IMR-90 (cell line): ENCODE measurements at regions of chr16 and their contacts with region 1.

Region 1: DNA sequence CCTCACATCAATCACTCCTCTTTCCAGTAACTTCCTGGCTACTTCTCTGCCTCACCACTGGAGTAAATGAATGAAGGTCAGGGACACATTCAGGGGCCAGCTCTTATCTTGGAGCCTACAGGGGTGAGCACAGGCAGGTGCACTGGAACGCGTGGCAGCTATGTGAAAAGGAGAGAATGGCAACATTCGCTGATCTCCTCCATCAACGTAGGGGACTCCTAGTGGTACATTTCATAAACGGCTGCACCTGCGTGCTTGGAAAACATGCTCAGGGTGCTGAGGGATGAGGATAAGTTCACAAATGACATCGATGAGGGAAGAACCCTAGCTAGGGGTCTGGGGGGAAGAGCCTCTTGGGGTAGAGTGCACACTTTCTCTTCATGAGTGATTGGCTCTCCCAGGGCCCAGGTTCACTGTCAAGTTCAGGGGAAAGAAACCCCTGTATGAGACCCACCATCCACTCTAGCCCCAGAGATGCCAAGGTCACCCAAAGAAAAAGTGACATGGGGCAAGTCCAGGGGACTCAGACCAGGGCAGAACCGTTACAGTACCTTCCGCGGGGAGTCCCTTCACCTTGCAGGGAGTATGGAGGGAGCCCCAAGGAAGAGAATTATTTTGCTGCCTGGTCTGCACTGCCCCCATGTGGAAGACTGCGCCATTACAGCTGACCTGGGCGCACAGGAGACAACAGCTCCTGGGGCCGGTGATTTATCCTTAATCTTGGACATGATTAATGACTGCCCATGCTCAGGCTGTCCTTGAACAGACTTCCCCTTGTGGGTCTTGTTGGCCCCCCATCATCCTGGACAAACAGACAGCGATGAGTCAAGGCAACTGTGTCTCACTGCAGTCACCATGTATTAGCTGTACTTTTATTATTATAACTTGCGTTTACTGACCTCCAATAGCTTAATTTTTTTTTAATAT is 30.1 kb downstream of the VAC14 start:
- DNase-seq: peak; percentile 54
- ATAC-seq: peak; percentile 94
- H3K4me3 ChIP-seq: no peak overlapping the region
- H3K27ac ChIP-seq: no peak overlapping the region
- H3K4me1 ChIP-seq: peaks cover 7% of the 10 kb centered on the region
- H3K27me3 ChIP-seq: no peaks in the 10 kb centered on the region
- CTCF ChIP-seq: peak; percentile 93
- POLR2A ChIP-seq: no peak
- RAD21 ChIP-seq: peak; percentile 98

Region 2: DNA sequence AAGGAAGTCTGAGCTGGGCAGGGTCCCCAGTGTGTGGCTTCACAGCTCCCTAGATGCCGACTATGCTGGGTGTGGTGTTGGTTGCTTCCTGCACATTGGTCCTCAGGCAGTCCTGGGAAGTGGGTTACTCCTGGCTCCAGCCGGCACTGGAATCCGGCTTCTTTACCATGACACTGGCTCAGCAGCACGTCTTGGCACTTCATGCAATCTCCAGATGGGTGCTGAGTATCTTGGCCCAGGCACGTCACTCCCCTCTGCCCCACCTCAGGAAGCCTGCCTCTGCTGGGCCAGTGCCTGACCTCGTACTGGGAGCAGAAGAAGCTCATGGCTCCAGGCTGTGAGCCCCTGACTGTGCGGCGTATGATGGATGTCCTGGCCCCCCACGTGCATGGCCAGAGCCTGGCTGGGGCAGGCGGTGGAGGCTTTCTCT is 292.0 kb before region 1 on chr16:
- CTCF ChIA-PET with region 1: no interaction called
- POLR2A ChIA-PET with region 1: no interaction called
- dilution Hi-C with region 1: no loop called
- in situ Hi-C with region 1: no loop called
- intact Hi-C with region 1: no loop called
- DNase-seq: no peak
- ATAC-seq: no peak
- H3K4me3 ChIP-seq: no peak overlapping the region
- H3K27ac ChIP-seq: no peak overlapping the region
- H3K4me1 ChIP-seq: peaks cover 15% of the 10 kb centered on the region
- H3K27me3 ChIP-seq: no peaks in the 10 kb centered on the region
- CTCF ChIP-seq: no peak
- POLR2A ChIP-seq: no peak
- RAD21 ChIP-seq: no peak

Region 3: DNA sequence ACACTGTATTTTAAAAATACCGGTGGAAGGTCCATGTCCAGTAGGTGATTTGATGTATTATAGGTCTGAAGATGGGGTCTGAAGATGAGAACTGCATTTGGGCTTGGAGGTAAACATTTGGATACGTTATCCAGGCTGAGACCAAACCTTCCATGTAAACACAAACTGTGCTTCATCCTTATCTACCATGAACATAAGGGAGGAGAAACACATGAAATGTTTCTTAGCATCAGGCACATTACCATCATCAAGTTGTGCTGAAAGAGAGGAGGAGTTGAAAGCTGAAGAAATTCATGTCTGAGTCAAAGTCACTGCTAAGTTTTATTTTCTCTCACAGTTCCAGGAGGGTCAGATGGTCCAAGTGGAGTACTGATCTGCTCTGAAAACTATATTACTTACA is 235.9 kb before region 1 on chr16:
- CTCF ChIA-PET with region 1: no interaction called
- POLR2A ChIA-PET with region 1: no interaction called
- dilution Hi-C with region 1: no loop called
- in situ Hi-C with region 1: loop called (anchors 10 kb)
- intact Hi-C with region 1: no loop called
- DNase-seq: no peak
- ATAC-seq: no peak
- H3K4me3 ChIP-seq: no peak overlapping the region
- H3K27ac ChIP-seq: no peak overlapping the region
- H3K4me1 ChIP-seq: no peaks in the 10 kb centered on the region
- H3K27me3 ChIP-seq: no peaks in the 10 kb centered on the region
- CTCF ChIP-seq: no peak
- POLR2A ChIP-seq: no peak
- RAD21 ChIP-seq: no peak

Region 4: DNA sequence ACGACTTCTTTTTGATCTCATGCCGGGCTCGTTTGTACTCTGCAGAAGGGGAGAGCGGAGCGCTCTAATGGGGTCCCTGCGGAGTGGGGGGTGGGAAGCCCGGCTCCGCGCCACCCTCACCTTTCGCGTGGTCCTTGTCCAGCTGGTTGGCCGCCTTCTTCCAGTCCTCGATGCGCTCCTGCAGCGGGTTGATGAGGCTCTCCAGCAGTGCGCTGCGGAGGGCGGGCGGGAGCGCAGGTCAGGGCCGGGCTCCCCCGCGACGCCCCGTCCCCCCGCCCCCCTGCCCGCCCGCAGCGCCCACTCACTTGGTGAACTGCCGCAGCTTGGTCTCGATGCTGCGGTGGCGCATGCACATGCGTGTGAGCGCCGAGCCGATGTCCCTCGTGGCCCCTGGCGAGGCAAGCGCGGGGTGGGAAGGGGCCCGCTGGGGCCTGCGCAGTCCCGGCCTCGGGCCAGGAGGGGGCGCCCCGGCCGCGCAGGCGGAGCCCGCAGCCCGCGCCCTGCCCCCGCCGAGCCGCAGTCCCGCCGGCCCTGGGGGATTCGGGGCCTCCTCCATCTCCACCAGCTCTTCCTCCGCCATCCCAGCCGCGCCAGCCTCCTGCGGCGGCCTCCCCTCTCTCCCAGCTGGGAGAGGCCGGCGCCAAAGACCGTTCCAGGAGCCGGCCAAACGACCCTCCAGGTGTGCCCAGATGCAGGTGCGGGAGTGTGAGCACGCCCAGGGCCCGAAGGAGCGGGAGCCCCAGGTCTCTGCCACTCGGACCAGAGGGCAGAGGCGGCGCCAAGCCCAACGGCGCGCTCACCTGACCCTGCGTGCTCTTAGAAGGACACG is 91.0 kb before region 1 on chr16:
- CTCF ChIA-PET with region 1: interaction called, 5 read pairs
- POLR2A ChIA-PET with region 1: no interaction called
- dilution Hi-C with region 1: loop called (anchors 10 kb)
- in situ Hi-C with region 1: loop called (anchors 5 kb)
- intact Hi-C with region 1: loop called (anchors 1 kb)
- DNase-seq: no peak
- ATAC-seq: peak; percentile 36; the same call in 1 of the 2 replicates
- H3K4me3 ChIP-seq: no peak overlapping the region
- H3K27ac ChIP-seq: peak overlapping the region; percentile 15; the same call in 1 of the 2 replicates
- H3K4me1 ChIP-seq: peaks cover 33% of the 10 kb centered on the region
- H3K27me3 ChIP-seq: no peaks in the 10 kb centered on the region
- CTCF ChIP-seq: peak; percentile 58
- POLR2A ChIP-seq: no peak
- RAD21 ChIP-seq: peak; percentile 75

Region 5: DNA sequence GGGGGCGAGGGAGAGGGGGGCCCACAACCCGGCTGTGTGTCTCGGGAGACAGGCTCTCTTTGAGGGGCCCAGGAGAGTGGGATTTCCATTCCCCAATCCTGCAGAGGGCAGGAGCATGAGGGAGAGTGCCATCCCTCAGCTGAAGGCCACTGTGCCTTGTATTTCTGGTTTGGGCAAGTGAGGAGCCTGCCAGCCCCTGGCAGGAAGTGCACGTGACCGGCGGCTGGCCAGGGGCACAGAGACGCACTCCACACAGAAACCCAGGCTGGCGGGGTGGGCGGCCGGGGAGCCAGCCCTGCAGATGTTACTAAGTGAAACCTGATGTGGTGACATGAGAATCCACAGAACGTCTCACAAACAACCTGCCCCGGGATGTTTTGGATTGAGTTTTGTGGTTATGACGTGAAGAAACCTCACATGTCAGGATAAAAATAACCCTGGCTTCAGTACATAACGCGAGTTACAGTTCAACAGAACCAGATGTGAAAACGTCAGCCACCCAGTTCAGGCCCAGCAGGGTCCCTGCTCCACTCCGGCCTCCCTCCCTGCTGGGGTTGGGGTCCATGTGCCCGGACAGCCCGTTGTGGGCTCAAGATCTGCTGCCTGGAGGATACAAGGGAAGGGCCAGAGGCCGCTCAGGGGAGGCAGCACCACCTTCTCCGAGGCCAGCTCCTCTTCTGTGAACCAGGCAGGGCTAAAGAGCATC is 33.4 kb before region 1 on chr16:
- CTCF ChIA-PET with region 1: interaction called, 7 read pairs
- POLR2A ChIA-PET with region 1: no interaction called
- dilution Hi-C with region 1: no loop called
- in situ Hi-C with region 1: no loop called
- intact Hi-C with region 1: loop called (anchors 2 kb)
- DNase-seq: peak; percentile 99
- ATAC-seq: peak; percentile 28
- H3K4me3 ChIP-seq: no peak overlapping the region
- H3K27ac ChIP-seq: peak overlapping the region; percentile 95
- H3K4me1 ChIP-seq: peaks cover 58% of the 10 kb centered on the region
- H3K27me3 ChIP-seq: no peaks in the 10 kb centered on the region
- CTCF ChIP-seq: no peak
- POLR2A ChIP-seq: peak; percentile 86
- RAD21 ChIP-seq: 0 out of 2 replicates have a peak, but pooled peaks have one; percentile 26

Region 6: GRCh38 chr16:71358464-71358998 is 587.6 kb after region 1 on chr16 and contains the start of gene CALB2:
- CTCF ChIA-PET with region 1: interaction called, 4 read pairs
- POLR2A ChIA-PET with region 1: no interaction called
- dilution Hi-C with region 1: no loop called
- in situ Hi-C with region 1: no loop called
- intact Hi-C with region 1: loop called (anchors 10 kb)
- DNase-seq: peak; percentile 20
- ATAC-seq: peak; percentile 93
- H3K4me3 ChIP-seq: peak within 1 kb of the TSS; percentile 20; the same call in 1 of the 2 replicates
- H3K27ac ChIP-seq: no peak within 1 kb of the TSS
- H3K4me1 ChIP-seq: peaks cover 9% of the 10 kb centered on the region
- H3K27me3 ChIP-seq: peaks cover 19% of the 10 kb centered on the region
- CTCF ChIP-seq: peak; percentile 90
- POLR2A ChIP-seq: no peak
- RAD21 ChIP-seq: peak; percentile 75
- total RNA-seq, gene CALB2: 0.18 TPM in 1 of 2 replicates, not detected in the other